Breast epithelium (tissue), 4 donors: ENCODE measurements at regions of chr19 and their contacts with region 1.

Region 1: GRCh38 chr19:49860807-49861506 is 6.4 kb downstream of the PNKP start:
- DNase-seq: no peak
- H3K4me3 ChIP-seq: peak overlapping the region in 1 of 3 donors; percentile 3
- H3K27ac ChIP-seq: peak overlapping the region; percentile 62 to 72
- H3K4me1 ChIP-seq: peaks cover 0 to under 1% of the 10 kb centered on the region in 2 donors
- H3K27me3 ChIP-seq: no peaks in the 10 kb centered on the region
- CTCF ChIP-seq: no peak
- POLR2A ChIP-seq: no peak

Region 2: DNA sequence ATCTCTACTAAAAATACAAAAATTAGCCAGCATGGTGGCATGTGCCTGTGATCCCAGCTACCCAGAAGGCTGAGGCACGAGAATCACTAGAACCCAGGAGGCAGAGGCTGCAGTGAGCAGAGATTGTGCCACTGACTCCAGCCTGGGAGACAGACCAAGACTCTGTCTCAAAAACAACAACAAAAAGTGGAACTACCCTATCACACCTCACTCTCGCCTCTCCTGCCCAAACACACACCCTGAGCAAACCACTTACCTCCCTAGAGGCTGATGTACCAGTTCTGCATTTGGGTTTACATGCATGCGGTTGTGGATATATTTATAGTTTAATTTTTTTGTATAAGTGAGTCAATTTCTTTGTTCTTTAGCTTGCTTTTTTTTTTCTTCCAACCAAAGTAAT is 17.7 kb before region 1 on chr19:
- intact Hi-C with region 1: no loop called
- DNase-seq: no peak
- H3K4me3 ChIP-seq: no peak overlapping the region
- H3K27ac ChIP-seq: no peak overlapping the region
- H3K4me1 ChIP-seq: no peaks in the 10 kb centered on the region
- H3K27me3 ChIP-seq: no peaks in the 10 kb centered on the region
- CTCF ChIP-seq: no peak
- POLR2A ChIP-seq: no peak

Region 3: GRCh38 chr19:49889687-49890348 is 28.9 kb after region 1 on chr19:
- intact Hi-C with region 1: loop called (anchors 1 kb)
- DNase-seq: peak; percentile 55 to 66
- H3K4me3 ChIP-seq: peak overlapping the region; percentile 8 to 59 (median 40)
- H3K27ac ChIP-seq: no peak overlapping the region
- H3K4me1 ChIP-seq: no peaks in the 10 kb centered on the region
- H3K27me3 ChIP-seq: no peaks in the 10 kb centered on the region
- CTCF ChIP-seq: peak; percentile 45 to 78 (median 51)
- POLR2A ChIP-seq: no peak

Region 4: DNA sequence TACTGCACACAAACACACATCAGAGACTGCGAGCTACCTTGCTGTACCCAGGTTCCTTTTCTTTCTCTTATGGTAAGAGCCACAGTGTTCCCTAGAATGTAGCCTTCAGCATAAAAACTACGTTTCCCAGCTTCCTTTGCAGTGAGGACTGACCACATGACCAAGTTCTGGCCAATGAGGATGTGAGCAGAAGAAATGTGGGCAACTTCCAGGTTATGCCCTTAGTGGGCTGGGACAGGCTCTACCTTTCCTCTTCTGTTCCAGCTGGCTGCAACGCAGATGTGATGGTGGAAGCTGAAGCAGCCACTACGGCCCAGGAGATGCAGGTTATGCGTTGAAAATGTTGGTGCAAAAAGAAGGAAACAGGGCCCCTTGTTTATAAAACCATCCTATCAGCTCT is 136.8 kb after region 1 on chr19:
- intact Hi-C with region 1: no loop called
- DNase-seq: no peak
- H3K4me3 ChIP-seq: no peak overlapping the region
- H3K27ac ChIP-seq: no peak overlapping the region
- H3K4me1 ChIP-seq: no peaks in the 10 kb centered on the region
- H3K27me3 ChIP-seq: no peaks in the 10 kb centered on the region
- CTCF ChIP-seq: no peak
- POLR2A ChIP-seq: no peak